Right ventricle myocardium inferior (tissue), 1 donor: ENCODE measurements at regions of chr13 and their contacts with region 1.

Region 1: DNA sequence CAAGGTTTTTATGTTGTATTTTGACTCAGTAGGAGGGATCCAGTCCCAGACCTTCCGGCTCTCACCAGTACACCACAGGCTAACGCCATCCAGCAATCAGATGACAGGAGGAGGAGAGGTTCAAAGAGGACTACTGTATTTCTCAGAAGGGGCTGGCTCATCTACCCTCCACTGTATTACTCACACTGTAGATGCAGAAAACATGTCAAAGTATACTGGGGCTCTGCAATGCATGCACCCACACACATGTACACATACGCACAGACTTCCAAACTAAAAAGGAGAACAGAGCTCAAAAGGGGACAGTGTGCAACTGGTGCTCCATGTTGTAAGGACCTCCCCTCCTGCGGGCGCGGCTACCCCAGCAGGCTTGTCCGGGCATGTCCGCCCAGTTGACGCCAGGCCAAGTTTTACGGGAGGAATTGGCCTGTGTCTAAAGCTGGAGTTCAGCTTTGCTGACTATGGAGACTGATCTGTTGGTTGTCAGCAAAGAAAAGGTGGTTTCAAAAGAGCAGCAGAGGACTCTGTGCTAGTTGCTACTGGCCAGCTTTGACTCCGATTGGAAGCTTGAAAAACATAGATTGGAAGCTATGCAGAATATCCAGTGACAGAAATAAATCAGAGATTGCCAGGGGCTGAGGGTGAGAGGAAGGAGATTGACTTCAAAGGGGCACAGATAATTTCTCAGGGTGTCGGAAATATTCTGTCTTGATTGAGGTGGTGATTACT is 314.2 kb downstream of the DLEU7 start:
- DNase-seq: peak; percentile 94
- ATAC-seq: peak; percentile 95

Region 2: GRCh38 chr13:50081679-50082425 is 447.5 kb before region 1 on chr13:
- intact Hi-C with region 1: loop called (anchors 5 kb)
- DNase-seq: peak; percentile 98
- ATAC-seq: peak; percentile 97

Region 3: GRCh38 chr13:50167224-50167947 is 361.9 kb before region 1 on chr13:
- intact Hi-C with region 1: loop called (anchors 5 kb)
- DNase-seq: no peak
- ATAC-seq: no peak

Region 4: DNA sequence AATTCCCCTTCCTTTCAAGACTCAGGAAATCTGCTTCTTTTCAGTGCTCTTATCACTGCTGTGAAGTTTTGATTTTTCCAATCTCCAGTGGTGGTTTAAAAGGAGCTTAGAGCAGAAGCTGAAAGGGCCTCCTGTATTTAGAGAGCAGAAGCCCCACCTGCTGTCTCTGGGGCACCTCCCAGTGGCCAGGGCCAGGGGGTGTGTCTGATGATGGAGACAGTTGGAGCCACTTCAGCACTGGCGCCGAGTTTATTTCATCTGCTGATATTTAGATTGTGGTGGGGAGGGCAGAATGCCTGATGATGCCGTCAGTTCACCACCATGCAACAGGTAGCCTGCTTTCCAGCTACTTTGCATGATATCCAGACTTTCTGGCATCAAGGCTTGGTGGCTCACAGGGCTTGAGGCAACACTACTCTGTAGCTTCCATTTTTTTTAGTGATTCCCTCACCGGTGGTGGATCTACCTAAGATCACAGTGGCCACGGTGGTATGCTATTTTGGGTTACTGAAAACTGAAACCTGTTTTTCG is 142.2 kb before region 1 on chr13:
- intact Hi-C with region 1: loop called (anchors 5 kb)
- DNase-seq: peak; percentile 77
- ATAC-seq: peak; percentile 94

Region 5: GRCh38 chr13:50635504-50635903 is 106.2 kb after region 1 on chr13:
- intact Hi-C with region 1: no loop called
- DNase-seq: no peak
- ATAC-seq: peak; percentile 91

Region 6: DNA sequence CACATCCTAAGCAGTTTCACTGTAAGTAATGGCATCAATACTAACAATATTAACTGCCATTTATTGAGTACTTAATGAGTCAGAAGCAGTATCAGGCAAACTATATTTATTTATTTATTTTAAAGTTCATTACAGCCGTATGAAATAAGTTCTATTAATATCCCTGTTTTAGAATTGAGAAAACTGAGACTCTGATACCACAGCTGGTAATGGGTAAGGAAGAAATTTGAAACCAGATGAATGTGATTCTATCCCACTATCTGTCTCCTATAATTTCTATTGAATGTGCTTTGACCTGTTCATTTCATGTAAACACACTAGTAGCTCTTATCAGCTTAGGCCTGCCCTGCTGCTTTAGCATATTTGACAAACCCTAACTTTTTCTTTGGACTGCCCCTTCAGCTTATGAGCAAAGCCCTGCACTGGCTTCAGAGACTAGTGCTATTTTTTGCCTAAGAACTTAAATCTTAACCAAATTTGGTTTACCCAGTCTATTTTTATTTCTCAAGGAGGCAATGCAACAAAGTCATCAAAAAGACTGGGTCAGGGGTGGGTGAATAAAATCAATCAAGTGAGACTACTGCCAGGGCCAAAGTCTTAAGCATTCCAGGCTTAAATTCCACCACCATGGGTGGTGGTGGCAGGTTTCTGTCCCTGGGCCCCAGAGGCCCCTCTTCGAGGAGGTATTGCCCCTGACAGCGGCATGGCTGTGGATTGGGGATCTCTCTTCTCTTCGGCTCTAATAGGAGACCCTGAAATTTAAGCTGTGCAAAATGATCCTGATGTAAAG is 170.8 kb after region 1 on chr13:
- intact Hi-C with region 1: loop called (anchors 5 kb)
- DNase-seq: no peak
- ATAC-seq: no peak

Region 7: DNA sequence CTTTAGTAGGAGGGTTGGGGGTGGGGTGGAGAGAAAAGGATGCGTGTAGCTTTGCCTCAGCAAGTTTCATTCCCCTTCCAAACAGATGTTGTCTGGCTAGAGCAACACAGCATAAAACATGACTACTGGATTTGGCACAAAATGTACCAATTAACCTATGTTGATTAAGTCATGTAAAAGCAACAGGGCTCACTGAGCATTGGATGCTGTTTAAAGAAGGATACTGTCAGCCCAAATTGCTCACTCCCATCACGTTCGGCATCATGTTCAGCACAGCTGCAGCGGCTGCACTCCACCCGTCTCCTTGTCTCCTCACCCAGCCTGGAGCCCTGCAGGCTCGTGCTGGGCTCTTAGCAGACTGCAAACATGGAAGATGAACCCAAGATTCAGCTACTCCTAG is 236.7 kb after region 1 on chr13:
- intact Hi-C with region 1: no loop called
- DNase-seq: no peak
- ATAC-seq: no peak

Region 8: GRCh38 chr13:50911937-50912795 is 382.8 kb after region 1 on chr13:
- intact Hi-C with region 1: loop called (anchors 5 kb)
- DNase-seq: peak; percentile 92
- ATAC-seq: peak; percentile 30